Heart right ventricle (tissue), 16 donors: ENCODE measurements at regions of chr6 and their contacts with region 1.

Region 1: GRCh38 chr6:83057705-83058321 is 7.8 kb downstream of the UBE3D start:
- DNase-seq: peak in 1 of 2 donors; percentile 21
- ATAC-seq: peak in 5 of 8 donors; percentile 56 to 74 (median 67)
- H3K4me3 ChIP-seq: no peak overlapping the region
- H3K27ac ChIP-seq: no peak overlapping the region
- H3K4me1 ChIP-seq: peaks cover 0 to 3% (median 0%) of the 10 kb centered on the region in 9 donors
- H3K27me3 ChIP-seq: no peaks in the 10 kb centered on the region
- CTCF ChIP-seq: peak; percentile 22 to 72 (median 68)

Region 2: DNA sequence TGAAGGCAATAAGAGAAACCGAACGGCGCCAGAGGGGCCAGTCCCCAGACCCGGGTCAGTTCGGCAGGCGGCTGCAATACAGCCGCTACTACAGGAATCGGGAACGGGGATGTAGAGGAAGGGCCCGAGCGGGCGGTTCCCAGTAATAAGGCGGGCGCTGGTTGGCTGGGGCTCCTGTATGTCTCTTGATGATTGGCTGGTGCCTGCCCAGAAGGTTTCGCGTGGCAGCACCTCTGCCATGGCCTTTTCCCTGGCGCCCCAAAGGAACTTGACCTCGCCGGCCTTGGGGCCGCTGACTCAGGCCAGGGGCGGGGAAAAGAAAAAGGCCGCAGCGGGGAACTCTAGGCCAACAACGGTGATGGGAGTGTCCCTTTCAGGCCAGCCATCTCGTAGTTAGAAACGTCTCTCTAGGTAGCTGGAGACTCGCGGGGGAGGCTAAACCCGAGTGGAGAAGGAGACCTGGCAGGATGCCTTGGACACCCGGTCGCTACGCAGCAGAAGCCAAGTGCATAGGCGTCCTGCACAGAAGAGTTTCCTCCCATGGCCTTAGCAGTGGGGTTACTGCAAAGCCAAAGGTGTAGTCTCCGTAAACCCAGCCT is 810.1 kb before region 1 on chr6 and contains the start of gene IBTK:
- intact Hi-C with region 1: loop called in 8 of 10 experiments (anchors 2 to 5 kb)
- DNase-seq: peak; percentile 95
- ATAC-seq: peak; percentile 97 to 99 (median 99)
- H3K4me3 ChIP-seq: peak within 1 kb of the TSS; percentile 53 to 92 (median 83)
- H3K27ac ChIP-seq: peak within 1 kb of the TSS; percentile 7 to 97 (median 94)
- H3K4me1 ChIP-seq: peaks cover 3 to 49% (median 37%) of the 10 kb centered on the region in 9 donors
- H3K27me3 ChIP-seq: no peaks in the 10 kb centered on the region
- CTCF ChIP-seq: peak in 1 of 9 donors; percentile 1
- total RNA-seq, gene IBTK: 27.4 to 40.1 (median 36.4) TPM

Region 3: DNA sequence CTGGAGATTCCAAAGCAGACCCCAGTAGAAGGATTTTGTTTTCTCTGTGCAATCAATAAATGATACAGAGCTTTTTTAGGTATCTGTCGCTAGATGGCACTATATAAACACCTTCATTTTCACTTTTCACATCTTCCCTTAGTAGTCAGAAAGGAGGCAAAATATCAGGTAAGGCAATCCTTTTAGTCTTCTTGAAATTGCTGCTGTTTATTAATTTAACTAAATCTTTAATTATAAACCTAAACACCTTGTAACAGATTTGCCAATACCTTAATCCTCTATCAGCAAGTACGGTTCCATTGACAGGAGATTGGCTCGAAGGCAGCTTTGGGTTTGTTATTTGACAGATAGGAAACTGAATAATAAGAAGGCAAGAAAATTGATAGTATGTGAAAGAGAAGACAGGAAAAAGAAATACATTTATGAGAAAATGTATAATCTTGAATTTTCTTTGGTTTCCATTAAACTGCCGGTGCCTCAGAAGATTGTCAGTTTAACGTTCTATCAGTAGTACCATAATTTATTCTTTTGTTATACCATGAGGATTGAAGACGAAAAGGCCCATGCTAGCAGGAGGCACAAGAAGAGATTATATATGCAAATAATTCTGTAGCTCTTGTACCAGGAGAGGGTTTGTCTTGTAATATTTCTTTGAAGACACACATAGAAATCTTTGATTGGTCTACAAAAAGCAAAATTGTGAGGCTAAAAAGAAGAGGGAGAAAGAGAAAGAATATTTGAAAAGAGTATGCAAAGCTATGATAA is 786.8 kb before region 1 on chr6:
- intact Hi-C with region 1: loop called (anchors 1 to 5 kb)
- DNase-seq: no peak
- ATAC-seq: peak in 1 of 8 donors; percentile 27
- H3K4me3 ChIP-seq: no peak overlapping the region
- H3K27ac ChIP-seq: no peak overlapping the region
- H3K4me1 ChIP-seq: no peaks in the 10 kb centered on the region
- H3K27me3 ChIP-seq: no peaks in the 10 kb centered on the region
- CTCF ChIP-seq: peak; percentile 31 to 75 (median 64)

Region 4: DNA sequence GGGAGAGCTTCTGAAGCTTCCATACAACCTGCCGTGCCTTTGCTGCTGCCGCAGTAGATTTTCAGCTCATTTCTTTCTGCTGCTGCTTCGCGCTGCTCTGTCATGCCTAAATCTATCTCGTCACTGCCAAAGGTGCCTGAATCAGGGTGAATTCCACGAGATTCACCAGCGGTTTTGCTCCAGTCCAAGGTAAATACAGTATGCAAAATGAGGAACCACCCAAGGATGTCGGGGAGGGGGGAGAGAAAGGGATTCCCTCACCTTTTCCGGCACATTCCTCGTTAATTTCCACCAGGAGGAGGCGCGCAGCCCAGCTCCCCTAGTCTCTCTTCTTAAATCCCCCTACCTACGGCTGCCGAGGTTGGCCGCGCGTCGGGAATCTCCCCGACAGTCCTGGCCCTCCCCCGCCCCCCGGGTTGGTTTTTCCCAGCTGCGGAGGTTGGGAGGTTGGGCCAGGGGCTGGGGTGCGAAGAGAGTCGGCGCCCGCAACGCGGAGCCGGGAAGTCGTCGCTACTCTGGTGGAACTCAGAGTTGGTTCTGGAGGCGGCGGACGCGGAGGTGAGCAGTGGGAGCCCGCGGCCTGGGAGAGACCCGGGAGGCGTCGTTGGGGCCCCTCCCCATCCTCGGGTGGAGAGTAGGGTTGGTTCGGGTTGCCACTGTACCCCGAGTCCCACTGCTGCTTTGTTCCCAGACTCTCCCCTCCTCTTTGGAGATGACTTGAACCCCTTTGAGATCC is 694.3 kb before region 1 on chr6 and contains the start of gene TPBG:
- intact Hi-C with region 1: loop called in 1 of 10 experiments (anchors 10 kb)
- DNase-seq: peak; percentile 42 to 44
- ATAC-seq: peak; percentile 71 to 88 (median 75)
- H3K4me3 ChIP-seq: peak within 1 kb of the TSS; percentile 34 to 80 (median 68)
- H3K27ac ChIP-seq: peak within 1 kb of the TSS; percentile 13 to 85 (median 74)
- H3K4me1 ChIP-seq: peaks cover 0 to 27% (median 13%) of the 10 kb centered on the region in 9 donors
- H3K27me3 ChIP-seq: peaks cover 0 to 70% (median 45%) of the 10 kb centered on the region in 7 donors
- CTCF ChIP-seq: peak in 4 of 9 donors; percentile 21 to 41 (median 37)
- total RNA-seq, gene TPBG: 1.4 to 3.5 (median 2.1) TPM

Region 5: GRCh38 chr6:82371799-82372546 is 685.8 kb before region 1 on chr6:
- intact Hi-C with region 1: loop called in 2 of 10 experiments (anchors 10 kb)
- DNase-seq: no peak
- ATAC-seq: no peak
- H3K4me3 ChIP-seq: no peak overlapping the region
- H3K27ac ChIP-seq: no peak overlapping the region
- H3K4me1 ChIP-seq: no peaks in the 10 kb centered on the region
- H3K27me3 ChIP-seq: peaks cover 0 to 2% (median 0%) of the 10 kb centered on the region in 7 donors
- CTCF ChIP-seq: no peak